ENCODE measurements at regions of chr12 and their contacts with region 1.

Region 1: DNA sequence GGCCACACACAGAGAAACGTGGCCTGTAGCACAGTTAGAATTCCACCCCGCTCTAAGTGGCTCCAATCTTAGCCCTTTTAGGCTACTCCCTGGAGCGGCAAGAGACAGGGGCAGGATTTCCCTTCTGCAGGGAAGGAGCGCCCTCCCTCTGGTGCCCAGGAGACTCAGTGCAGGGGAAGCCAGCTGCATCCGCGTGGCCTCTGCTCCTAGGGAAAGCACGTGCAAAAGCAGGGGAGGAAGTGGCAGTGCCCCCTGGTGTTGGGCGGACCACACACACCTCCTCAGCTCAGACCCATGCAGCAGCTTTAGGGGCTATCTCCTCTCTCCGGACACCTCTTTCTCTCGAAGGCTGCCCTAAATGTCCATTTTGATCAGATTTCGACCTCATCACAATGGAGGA is 50.0 kb downstream of the SPRING1 start:
- DNase-seq: no peak
- ATAC-seq: peak; percentile 85
- H3K4me3 ChIP-seq: no peak overlapping the region
- H3K27ac ChIP-seq: no peak overlapping the region
- H3K4me1 ChIP-seq: peaks cover 11% of the 10 kb centered on the region
- H3K27me3 ChIP-seq: no peaks in the 10 kb centered on the region
- CTCF ChIP-seq: peak; percentile 76

Region 2: DNA sequence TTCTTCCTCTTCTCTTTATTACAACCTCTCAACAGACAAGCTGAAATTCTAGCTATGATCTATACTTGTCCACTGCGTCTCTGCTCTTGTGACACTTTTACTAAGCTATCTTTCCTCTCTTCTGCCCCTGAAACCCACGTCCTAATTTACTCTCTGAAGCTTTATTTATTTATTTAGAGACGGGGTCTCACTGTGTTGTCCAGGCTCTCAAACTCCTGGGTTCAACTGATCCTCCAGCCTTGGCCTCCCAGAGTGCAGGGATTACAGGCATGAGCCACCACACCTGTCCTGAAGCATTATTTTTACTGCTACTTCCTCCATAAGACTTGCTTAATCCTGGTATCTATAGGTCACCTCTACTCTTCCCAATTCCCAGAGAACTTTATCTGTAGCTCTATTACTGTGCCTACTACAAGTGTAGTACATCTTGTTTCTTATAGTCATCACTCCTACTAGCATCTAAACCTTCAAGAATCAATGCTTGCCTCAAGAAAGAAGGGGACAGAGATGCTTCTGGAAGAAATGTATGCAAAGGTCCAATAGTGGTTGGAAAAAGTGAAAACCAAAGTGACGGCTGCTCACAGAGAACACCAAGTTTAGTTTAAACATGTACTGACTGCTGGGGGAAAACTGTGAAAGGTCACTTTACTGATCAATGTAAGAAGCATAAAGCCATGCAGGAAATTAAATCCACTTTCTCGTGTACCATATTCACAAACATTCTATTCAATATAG is 471.7 kb before region 1 on chr12:
- CTCF ChIA-PET with region 1: interaction called, 10 read pairs
- POLR2A ChIA-PET with region 1: no interaction called
- in situ Hi-C with region 1: no loop called
- intact Hi-C with region 1: no loop called
- DNase-seq: no peak
- ATAC-seq: no peak
- H3K4me3 ChIP-seq: no peak overlapping the region
- H3K27ac ChIP-seq: no peak overlapping the region
- H3K4me1 ChIP-seq: peaks cover 31% of the 10 kb centered on the region; the same call in 1 of the 2 replicates
- H3K27me3 ChIP-seq: no peaks in the 10 kb centered on the region
- CTCF ChIP-seq: no peak

Region 3: DNA sequence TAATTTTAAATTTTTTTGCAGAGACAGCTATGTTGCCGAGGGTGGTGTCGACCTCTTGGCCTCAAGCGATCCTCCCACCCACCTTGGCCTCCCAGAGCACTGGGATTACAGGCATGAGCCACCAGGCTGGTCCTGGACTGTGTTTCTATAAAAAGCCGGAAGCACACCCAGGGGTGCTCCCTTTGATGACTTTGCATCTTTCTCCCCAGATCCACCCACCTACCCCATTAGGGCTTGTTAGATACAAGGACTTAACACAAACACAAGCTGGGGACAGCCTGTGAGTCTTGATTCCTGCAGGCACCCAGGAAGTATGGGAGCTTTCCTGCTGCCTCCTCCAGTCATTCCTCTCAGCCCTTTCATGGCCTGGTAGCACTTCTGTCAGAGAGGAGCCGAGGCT is 61.7 kb before region 1 on chr12:
- CTCF ChIA-PET with region 1: no interaction called
- POLR2A ChIA-PET with region 1: interaction called, 11 read pairs
- in situ Hi-C with region 1: no loop called
- intact Hi-C with region 1: no loop called
- DNase-seq: no peak
- ATAC-seq: no peak
- H3K4me3 ChIP-seq: no peak overlapping the region
- H3K27ac ChIP-seq: no peak overlapping the region
- H3K4me1 ChIP-seq: no peaks in the 10 kb centered on the region
- H3K27me3 ChIP-seq: no peaks in the 10 kb centered on the region
- CTCF ChIP-seq: no peak

Region 4: DNA sequence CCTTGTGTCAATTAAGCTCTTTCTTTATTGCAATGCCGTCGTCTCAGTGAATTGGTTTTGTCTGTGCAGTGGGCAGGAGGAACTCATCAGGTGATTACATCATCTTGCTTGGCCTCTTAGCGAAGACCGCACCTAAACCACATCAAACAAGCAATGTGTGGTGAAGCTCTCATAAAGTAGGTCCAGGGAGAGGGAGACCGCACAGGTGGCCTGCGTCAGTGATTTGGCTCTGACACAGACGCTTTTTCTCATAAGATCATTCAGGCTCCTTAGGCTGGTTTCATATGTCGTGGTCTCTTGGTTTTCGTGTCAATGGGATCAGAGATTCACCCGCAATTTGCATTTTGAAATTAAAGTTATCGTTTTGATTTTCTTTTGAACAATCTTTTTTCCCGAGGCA is 418.0 kb after region 1 on chr12:
- CTCF ChIA-PET with region 1: no interaction called
- POLR2A ChIA-PET with region 1: no interaction called
- in situ Hi-C with region 1: no loop called
- intact Hi-C with region 1: no loop called
- DNase-seq: no peak
- ATAC-seq: no peak
- H3K4me3 ChIP-seq: no peak overlapping the region
- H3K27ac ChIP-seq: no peak overlapping the region
- H3K4me1 ChIP-seq: no peaks in the 10 kb centered on the region
- H3K27me3 ChIP-seq: 0 out of 2 replicates have a peak, but pooled peaks cover 3% of the 10 kb centered on the region
- CTCF ChIP-seq: no peak

Region 5: DNA sequence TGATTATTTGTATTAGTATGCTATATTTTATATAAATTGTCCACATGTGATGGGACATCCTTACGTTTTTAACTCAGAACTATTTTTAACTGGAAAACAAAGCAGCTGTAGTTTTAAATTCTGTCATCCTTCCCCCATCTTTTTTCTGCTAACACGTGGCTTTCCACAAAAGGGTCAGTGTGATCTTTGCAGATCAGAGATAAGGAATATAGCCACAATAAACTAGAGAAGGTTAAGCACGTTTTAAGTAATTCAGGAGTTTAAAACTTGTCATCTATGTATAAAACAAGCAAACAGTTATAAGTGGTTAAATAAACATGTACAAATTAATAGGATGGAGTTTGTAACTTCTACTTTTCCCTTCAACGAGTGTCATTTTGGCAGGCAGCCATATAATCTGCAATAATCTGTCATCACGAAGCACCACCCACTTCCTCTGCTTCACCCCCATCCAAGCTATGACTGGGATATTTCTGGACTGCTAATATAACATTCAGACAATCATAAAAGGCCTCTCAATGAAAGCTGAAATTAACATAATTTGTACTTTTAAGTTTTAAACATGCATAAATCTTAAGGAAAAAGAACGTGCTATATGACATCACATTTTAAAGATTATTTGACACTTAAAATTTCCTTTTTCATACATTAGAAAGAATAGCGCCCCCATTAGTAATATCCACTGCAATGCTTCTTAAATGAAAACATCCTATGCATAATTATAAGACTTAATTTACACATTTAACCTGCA is 1669.5 kb after region 1 on chr12:
- CTCF ChIA-PET with region 1: no interaction called
- POLR2A ChIA-PET with region 1: no interaction called
- in situ Hi-C with region 1: no loop called
- intact Hi-C with region 1: no loop called
- DNase-seq: no peak
- ATAC-seq: no peak
- H3K4me3 ChIP-seq: no peak overlapping the region
- H3K27ac ChIP-seq: peak overlapping the region; percentile 52
- H3K4me1 ChIP-seq: peaks cover 43% of the 10 kb centered on the region
- H3K27me3 ChIP-seq: no peaks in the 10 kb centered on the region
- CTCF ChIP-seq: no peak

Measured in Panc1 (cell line).